K562 (cell line): ENCODE measurements at regions of chr18 and their contacts with region 1.

Region 1: DNA sequence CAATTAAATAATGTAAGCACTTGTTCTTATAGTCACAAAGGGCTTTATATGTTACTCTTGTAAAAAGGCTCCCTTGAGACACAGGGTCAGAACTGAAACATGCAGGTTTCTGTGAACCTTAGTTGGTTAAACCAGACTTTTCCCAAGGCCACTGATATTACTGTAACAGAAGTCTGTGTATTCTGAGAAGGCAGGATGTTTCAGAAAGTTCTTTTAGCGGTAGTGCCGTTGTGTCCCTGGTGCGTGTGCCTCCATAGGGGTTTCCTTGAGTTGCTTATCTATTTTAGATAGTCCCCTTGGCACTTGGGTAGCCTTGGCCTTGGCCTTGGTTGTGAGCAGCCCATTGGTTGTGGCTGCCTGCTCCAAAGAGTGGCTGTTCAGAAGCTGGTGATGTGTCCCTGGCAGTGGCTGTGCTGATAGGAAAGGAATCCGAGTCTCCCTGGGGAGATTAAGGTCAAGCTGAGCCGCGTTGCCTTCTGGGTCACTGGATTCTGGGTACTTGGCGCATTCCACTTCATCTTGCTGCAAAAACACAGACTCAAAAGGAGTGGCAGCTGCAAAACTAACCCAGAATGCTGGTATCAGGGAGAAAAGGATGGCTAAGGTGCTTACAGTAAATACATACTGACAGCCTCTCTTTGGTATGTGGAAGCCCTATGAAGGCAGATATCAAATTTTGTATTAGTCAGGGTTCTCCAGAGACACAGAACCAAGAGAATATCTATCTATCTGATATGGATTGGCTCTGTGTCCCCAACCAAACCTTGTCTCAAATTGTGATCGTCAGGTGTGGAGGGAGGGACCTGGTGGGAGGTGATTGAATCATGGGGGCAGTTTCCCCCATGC is 69.7 kb downstream of the FHOD3 start:
- DNase-seq: no peak
- ATAC-seq: peak; percentile 32; the same call in 2 of the 3 replicates
- H3K4me3 ChIP-seq: no peak overlapping the region
- H3K27ac ChIP-seq: no peak overlapping the region
- H3K4me1 ChIP-seq: no peaks in the 10 kb centered on the region
- H3K27me3 ChIP-seq: no peaks in the 10 kb centered on the region; a peak in 1 of 5 replicates
- CTCF ChIP-seq: no peak
- EP300 ChIP-seq: no peak
- POLR2A ChIP-seq: no peak
- RAD21 ChIP-seq: no peak

Region 2: GRCh38 chr18:34985963-34986362 is 1381.3 kb before region 1 on chr18:
- CTCF ChIA-PET with region 1: no interaction called
- POLR2A ChIA-PET with region 1: no interaction called
- in situ Hi-C with region 1: loop called (anchors 10 kb)
- intact Hi-C with region 1: no loop called
- DNase-seq: no peak
- ATAC-seq: no peak
- H3K4me3 ChIP-seq: no peak overlapping the region
- H3K27ac ChIP-seq: no peak overlapping the region
- H3K4me1 ChIP-seq: no peaks in the 10 kb centered on the region
- H3K27me3 ChIP-seq: peaks cover 0 to 5% of the 10 kb centered on the region in 2 experiments; a peak in 1 of 5 replicates
- CTCF ChIP-seq: no peak
- EP300 ChIP-seq: no peak
- POLR2A ChIP-seq: no peak
- RAD21 ChIP-seq: no peak

Region 3: DNA sequence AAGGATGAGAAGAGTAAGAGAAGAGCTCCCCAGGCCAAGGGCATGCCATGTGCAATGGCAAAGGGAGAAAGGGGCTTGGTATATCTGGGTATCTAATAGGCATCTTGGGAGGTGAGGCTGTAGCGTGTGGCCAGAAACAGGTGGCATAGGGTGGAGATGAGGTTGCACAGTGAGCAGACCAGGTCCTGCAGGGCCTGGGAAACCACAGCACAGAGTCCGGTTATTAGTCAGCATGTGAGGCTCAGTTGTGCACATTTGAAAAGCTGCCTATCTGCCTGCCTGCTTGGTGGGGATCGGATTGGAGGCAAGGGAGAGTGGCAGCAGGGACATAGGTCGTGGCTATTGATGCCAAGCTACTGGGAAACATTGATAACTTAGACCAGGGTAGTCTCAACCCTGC is 271.0 kb after region 1 on chr18:
- CTCF ChIA-PET with region 1: no interaction called
- POLR2A ChIA-PET with region 1: no interaction called
- in situ Hi-C with region 1: no loop called
- intact Hi-C with region 1: no loop called
- DNase-seq: no peak
- ATAC-seq: no peak
- H3K4me3 ChIP-seq: no peak overlapping the region
- H3K27ac ChIP-seq: no peak overlapping the region
- H3K4me1 ChIP-seq: no peaks in the 10 kb centered on the region
- H3K27me3 ChIP-seq: peaks cover 0 to 13% of the 10 kb centered on the region in 2 experiments; a peak in 3 of 5 replicates
- CTCF ChIP-seq: no peak
- EP300 ChIP-seq: no peak
- POLR2A ChIP-seq: no peak
- RAD21 ChIP-seq: no peak